Right ventricle myocardium superior (tissue), 1 donor: ENCODE measurements at regions of chr1 and their contacts with region 1.

Region 1: GRCh38 chr1:206684478-206685333 is at the start of gene MAPKAPK2:
- DNase-seq: peak; percentile 89
- ATAC-seq: peak; percentile 72
- total RNA-seq, gene MAPKAPK2: 200 TPM

Region 2: GRCh38 chr1:206612129-206612876 is 72.4 kb before region 1 on chr1 and contains the start of gene EIF2D:
- intact Hi-C with region 1: no loop called
- DNase-seq: peak; percentile 96
- ATAC-seq: peak; percentile 100
- total RNA-seq, gene EIF2D: 24.9 TPM

Region 3: DNA sequence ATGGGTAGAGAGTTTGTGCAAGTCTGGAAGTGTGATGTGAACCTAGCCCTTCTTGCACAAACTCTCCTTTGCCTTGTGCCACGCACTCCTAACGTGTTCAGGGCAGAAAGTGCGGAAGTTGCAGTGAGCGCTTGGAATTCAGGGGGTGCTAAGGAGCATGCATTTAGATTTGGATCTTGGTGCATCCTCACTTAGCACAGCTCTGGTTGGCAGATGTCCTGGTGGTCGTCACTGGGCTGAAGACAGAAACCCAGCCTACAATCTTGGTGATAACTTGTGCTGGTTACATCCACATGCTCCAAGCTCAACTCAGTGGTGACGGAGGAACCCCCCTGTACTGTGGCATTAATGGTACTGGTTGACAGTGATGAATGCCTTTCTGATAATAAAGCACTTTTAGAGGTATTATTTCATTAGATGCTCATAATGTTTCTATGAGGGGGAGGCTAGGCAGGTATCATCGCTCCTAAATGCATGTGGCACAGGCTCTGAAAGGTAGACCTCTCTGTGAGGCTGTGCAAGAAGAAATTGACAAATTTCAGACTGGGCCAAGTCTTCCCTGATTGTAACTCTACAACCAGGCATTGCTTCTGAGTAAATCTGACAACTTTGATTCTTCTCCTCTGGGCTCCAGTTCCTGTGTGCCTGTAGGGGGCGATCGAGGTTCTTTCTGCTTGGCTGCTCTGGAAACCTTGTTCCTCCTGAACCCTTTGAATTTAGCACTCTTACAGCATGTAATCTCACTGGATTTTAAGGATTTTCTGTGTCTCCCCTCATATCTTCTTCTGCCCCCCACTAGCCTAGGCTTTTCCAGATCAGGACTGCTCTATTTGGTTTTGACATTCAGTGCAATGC is 40.6 kb after region 1 on chr1:
- intact Hi-C with region 1: loop called (anchors 5 kb)
- DNase-seq: no peak
- ATAC-seq: peak; percentile 9

Region 4: GRCh38 chr1:207172885-207173284 is 488.2 kb after region 1 on chr1:
- intact Hi-C with region 1: no loop called
- DNase-seq: no peak
- ATAC-seq: no peak